ENCODE measurements at regions of chr1 and their contacts with region 1.

Region 1: GRCh38 chr1:205485338-205486228 is 18.9 kb upstream of the CDK18 start:
- DNase-seq: peak; percentile 37 to 75 (median 64)
- ATAC-seq: peak; percentile 84
- H3K4me3 ChIP-seq: no peak overlapping the region
- H3K4me3 Mint-ChIP-seq: no peak overlapping the region
- H3K27ac ChIP-seq: no peak overlapping the region
- H3K27ac Mint-ChIP-seq: no peak overlapping the region
- H3K4me1 ChIP-seq: peaks cover 0 to 19% of the 10 kb centered on the region in 2 donors
- H3K4me1 Mint-ChIP-seq: peaks cover 2 to 30% (median 10%) of the 10 kb centered on the region in 7 donors
- H3K27me3 ChIP-seq: peaks cover 0 to 7% of the 10 kb centered on the region in 2 donors
- H3K27me3 Mint-ChIP-seq: peaks cover 42 to 63% (median 57%) of the 10 kb centered on the region in 5 donors

Region 2: DNA sequence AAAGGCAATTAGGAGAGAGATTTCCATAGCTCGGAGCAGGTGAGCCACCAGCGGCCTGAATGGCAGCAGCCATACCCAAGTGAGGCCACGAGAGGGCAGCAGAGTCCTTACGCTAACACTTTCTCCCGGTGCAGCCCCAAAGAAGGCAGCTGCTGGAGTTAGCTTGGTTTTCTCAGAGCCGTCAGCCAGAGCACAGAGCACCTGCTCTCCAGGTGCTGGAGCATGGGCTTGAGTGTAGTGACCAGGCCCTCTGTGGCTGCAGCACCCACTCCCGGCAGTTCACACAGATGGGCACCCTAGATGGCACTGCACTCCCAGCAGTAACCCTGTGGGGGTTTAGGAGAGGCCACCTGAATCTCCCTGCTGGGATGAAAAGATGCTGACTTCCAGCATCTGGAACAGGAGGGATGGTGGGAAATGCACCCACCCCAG is 212.0 kb before region 1 on chr1:
- CTCF ChIA-PET with region 1: interaction called, 47 read pairs
- POLR2A ChIA-PET with region 1: interaction called, 3 read pairs
- intact Hi-C with region 1: loop called in 1 of 2 experiments (anchors 1 kb)
- DNase-seq: peak; percentile 77 to 87 (median 80)
- ATAC-seq: peak; percentile 93
- H3K4me3 ChIP-seq: peak overlapping the region; percentile 35
- H3K4me3 Mint-ChIP-seq: peak overlapping the region in 9 of 10 donors; percentile 60 to 77 (median 73)
- H3K27ac ChIP-seq: no peak overlapping the region
- H3K27ac Mint-ChIP-seq: peak overlapping the region in 8 of 9 donors; percentile 70 to 93 (median 80)
- H3K4me1 ChIP-seq: peaks cover 22 to 42% of the 10 kb centered on the region in 2 donors
- H3K4me1 Mint-ChIP-seq: peaks cover 16 to 48% (median 36%) of the 10 kb centered on the region in 7 donors
- H3K27me3 ChIP-seq: no peaks in the 10 kb centered on the region
- H3K27me3 Mint-ChIP-seq: peaks cover 0 to under 1% (median 0%) of the 10 kb centered on the region in 5 donors

Region 3: GRCh38 chr1:205354259-205354904 is 131.2 kb before region 1 on chr1:
- CTCF ChIA-PET with region 1: interaction called, 44 read pairs
- POLR2A ChIA-PET with region 1: no interaction called
- intact Hi-C with region 1: loop called (anchors 1 kb)
- DNase-seq: peak in 8 of 9 donors; percentile 24 to 67 (median 52)
- ATAC-seq: peak; percentile 82
- H3K4me3 ChIP-seq: no peak overlapping the region
- H3K4me3 Mint-ChIP-seq: no peak overlapping the region
- H3K27ac ChIP-seq: no peak overlapping the region
- H3K27ac Mint-ChIP-seq: peak overlapping the region in 1 of 9 donors; percentile 32
- H3K4me1 ChIP-seq: no peaks in the 10 kb centered on the region
- H3K4me1 Mint-ChIP-seq: peaks cover 0 to 4% (median 0%) of the 10 kb centered on the region in 7 donors
- H3K27me3 ChIP-seq: no peaks in the 10 kb centered on the region
- H3K27me3 Mint-ChIP-seq: peaks cover 16 to 37% (median 20%) of the 10 kb centered on the region in 5 donors

Region 4: GRCh38 chr1:205430696-205431305 is 54.8 kb before region 1 on chr1:
- CTCF ChIA-PET with region 1: interaction called, 16 read pairs
- POLR2A ChIA-PET with region 1: no interaction called
- intact Hi-C with region 1: loop called in 1 of 2 experiments (anchors 2 kb)
- DNase-seq: peak; percentile 21 to 59 (median 51)
- ATAC-seq: peak; percentile 79
- H3K4me3 ChIP-seq: peak overlapping the region; percentile 44
- H3K4me3 Mint-ChIP-seq: peak overlapping the region; percentile 75 to 92 (median 86)
- H3K27ac ChIP-seq: no peak overlapping the region
- H3K27ac Mint-ChIP-seq: peak overlapping the region in 7 of 9 donors; percentile 52 to 88 (median 63)
- H3K4me1 ChIP-seq: peaks cover 0 to 6% of the 10 kb centered on the region in 2 donors
- H3K4me1 Mint-ChIP-seq: peaks cover 12 to 15% (median 15%) of the 10 kb centered on the region in 7 donors
- H3K27me3 ChIP-seq: no peaks in the 10 kb centered on the region
- H3K27me3 Mint-ChIP-seq: peaks cover 18 to 49% (median 22%) of the 10 kb centered on the region in 5 donors

Region 5: GRCh38 chr1:205510308-205510950 is 24.8 kb after region 1 on chr1:
- CTCF ChIA-PET with region 1: interaction called, 10 read pairs
- POLR2A ChIA-PET with region 1: no interaction called
- intact Hi-C with region 1: no loop called
- DNase-seq: no peak
- ATAC-seq: no peak
- H3K4me3 ChIP-seq: no peak overlapping the region
- H3K4me3 Mint-ChIP-seq: no peak overlapping the region
- H3K27ac ChIP-seq: no peak overlapping the region
- H3K27ac Mint-ChIP-seq: peak overlapping the region in 1 of 9 donors; percentile 28
- H3K4me1 ChIP-seq: peaks cover 0 to 4% of the 10 kb centered on the region in 2 donors
- H3K4me1 Mint-ChIP-seq: peaks cover 0 to 7% (median 5%) of the 10 kb centered on the region in 7 donors
- H3K27me3 ChIP-seq: no peaks in the 10 kb centered on the region
- H3K27me3 Mint-ChIP-seq: peaks cover 0 to 14% (median 0%) of the 10 kb centered on the region in 5 donors